Esophagus muscularis mucosa (tissue), 4 donors: ENCODE measurements at regions of chr3 and their contacts with region 1.

Region 1: DNA sequence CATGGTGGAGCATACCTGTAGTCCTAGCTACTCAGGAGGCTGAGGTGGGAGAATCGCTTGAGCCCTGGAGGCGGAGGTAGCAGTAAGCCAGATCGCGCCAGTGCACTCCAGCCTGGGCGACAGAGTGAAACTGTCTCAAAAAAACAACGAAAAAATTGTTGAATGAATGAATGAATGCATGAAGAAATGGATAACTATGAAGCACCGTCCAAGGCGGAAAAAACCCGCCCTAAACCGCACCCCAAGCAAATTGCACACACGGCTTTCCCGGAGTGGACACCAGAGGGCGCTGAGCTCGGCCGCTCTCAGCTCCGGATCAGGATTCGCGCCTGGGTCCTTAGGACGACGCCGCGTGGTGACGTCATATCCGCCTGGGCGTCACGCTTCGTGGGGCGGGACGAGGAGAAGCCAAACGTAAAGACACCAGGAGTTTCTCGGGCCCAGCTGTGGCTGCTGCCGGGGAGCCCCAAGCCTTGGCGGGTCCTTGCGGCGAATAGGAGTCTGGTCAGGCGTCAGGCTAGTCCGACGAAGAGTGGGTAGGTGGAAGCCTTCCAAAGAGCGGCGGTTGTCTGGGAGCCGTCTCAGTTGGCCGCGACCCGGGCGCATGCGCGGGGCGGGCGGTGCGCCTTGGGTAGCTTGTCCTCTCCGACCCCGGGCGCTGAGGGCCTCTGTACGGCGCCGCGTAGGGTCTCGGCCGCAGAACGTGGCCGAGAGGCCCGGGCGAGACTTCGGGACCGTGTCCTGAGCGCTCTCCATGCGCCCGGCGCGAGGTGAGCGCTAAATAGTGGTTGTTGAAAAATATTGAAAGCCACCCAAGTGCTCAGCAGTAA is at the starts of genes HTD2 and RPP14:
- DNase-seq: peak; percentile 100
- H3K4me3 ChIP-seq: peak within 1 kb of the TSS; percentile 73 to 87 (median 80)
- H3K27ac ChIP-seq: peak within 1 kb of the TSS; percentile 96 to 97 (median 96)
- H3K4me1 ChIP-seq: peaks cover 24 to 44% (median 38%) of the 10 kb centered on the region in 4 donors
- H3K27me3 ChIP-seq: peaks cover 0 to 5% (median 0%) of the 10 kb centered on the region in 4 donors
- CTCF ChIP-seq: peak; percentile 93 to 98 (median 97)
- EP300 ChIP-seq: no peak
- POLR2A ChIP-seq: peak; percentile 47
- total RNA-seq, gene HTD2: 7.5 to 12.3 (median 10.4) TPM
- total RNA-seq, gene RPP14: 9.1 to 16.0 (median 10.4) TPM

Region 2: DNA sequence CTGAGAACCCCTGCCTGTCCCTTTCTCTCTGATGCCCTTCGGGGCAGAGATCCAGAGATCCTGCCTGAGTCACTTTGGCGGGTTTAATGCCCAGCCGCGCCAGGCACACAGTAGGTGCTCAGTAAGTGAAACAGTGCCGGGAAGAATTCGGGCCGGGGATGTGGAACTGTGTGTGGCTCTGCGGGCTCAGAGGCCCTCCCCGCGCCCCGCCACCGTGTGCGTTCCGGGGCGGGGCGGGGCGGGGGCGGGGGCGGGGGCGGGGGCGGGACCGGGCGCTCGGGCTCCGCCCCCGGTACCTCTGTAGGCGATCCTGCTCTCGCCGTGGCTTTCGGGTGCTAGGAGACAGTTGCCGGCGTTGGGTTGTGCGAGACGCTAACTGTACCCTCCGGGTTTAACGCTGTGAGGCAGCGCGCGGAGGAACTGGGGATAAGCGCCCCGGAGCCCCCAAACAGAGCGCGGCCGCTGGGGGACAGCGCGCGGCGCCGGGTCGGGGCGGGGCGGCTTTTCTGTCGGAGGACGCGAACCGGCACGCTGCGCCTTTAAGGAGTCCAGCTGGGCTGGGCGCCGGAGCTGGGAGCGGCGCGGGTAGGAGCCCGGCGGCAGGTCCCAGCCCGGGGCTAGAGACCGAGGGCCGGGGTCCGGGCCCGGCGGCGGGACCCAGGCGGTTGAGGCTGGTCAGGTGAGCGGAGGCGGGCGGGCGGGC is 68.7 kb before region 1 on chr3 and contains the start of gene ABHD6:
- intact Hi-C with region 1: loop called (anchors 2 kb)
- DNase-seq: peak; percentile 95
- H3K4me3 ChIP-seq: peak within 1 kb of the TSS; percentile 80 to 90 (median 85)
- H3K27ac ChIP-seq: peak within 1 kb of the TSS; percentile 79 to 89 (median 85)
- H3K4me1 ChIP-seq: peaks cover 15 to 29% (median 21%) of the 10 kb centered on the region in 4 donors
- H3K27me3 ChIP-seq: no peaks in the 10 kb centered on the region
- CTCF ChIP-seq: peak; percentile 11 to 67 (median 50)
- EP300 ChIP-seq: no peak
- POLR2A ChIP-seq: no peak
- total RNA-seq, gene ABHD6: 13.1 to 20.3 (median 17.9) TPM

Region 3: DNA sequence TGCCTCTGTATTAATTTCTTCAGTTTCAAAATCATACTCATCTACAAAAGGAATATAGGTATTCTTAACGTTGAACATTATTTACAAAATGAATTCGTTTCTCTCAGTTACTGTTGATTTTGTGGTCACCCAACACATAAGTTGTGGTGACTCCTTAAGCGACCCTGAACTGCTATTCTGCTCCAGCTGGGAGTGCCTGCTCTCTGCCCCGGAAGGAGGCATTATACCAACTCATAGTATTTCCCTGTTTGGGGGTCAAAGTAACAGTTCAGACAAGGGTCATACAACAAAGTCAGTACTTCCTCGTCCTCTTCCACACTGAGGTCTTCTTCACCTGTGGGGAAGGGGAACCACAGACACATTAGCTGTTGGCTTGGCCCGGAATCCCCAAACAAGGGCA is 436.1 kb after region 1 on chr3:
- intact Hi-C with region 1: no loop called
- DNase-seq: no peak
- H3K4me3 ChIP-seq: no peak overlapping the region
- H3K27ac ChIP-seq: no peak overlapping the region
- H3K4me1 ChIP-seq: no peaks in the 10 kb centered on the region
- H3K27me3 ChIP-seq: no peaks in the 10 kb centered on the region
- CTCF ChIP-seq: no peak
- EP300 ChIP-seq: no peak
- POLR2A ChIP-seq: no peak